Heart right ventricle (tissue), 16 donors: ENCODE measurements at regions of chr11 and their contacts with region 1.

Region 1: GRCh38 chr11:111938687-111939160 is 1.6 kb downstream of the DIXDC1 start:
- DNase-seq: no peak
- ATAC-seq: peak in 6 of 8 donors; percentile 4 to 41 (median 19)
- H3K4me3 ChIP-seq: peak overlapping the region in 4 of 10 donors; percentile 6 to 68 (median 35)
- H3K27ac ChIP-seq: peak overlapping the region in 8 of 10 donors; percentile 68 to 84 (median 76)
- H3K4me1 ChIP-seq: peaks cover 2 to 73% (median 43%) of the 10 kb centered on the region in 9 donors
- H3K27me3 ChIP-seq: no peaks in the 10 kb centered on the region
- CTCF ChIP-seq: no peak

Region 2: DNA sequence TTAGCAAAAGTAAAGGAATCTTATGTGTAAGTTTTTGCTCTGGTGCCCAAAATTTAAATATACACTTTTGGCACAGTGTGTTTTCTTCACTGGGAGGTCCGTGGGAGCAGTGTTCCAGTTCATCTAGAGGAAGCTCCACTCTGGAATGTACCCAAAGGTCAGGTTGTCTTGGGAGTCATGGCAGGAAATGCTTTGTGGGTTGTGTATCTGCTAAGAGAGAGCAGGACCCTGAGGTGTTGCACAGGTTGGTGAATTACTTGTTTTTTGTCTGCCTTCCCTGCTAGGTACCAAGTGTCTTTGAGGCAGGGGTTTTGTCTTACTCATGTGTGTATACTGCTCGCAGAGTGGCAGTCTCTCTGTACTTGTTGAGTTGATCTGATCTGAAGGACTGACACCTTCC is 35.7 kb after region 1 on chr11:
- intact Hi-C with region 1: loop called in 7 of 10 experiments (anchors 5 kb)
- DNase-seq: no peak
- ATAC-seq: no peak
- H3K4me3 ChIP-seq: no peak overlapping the region
- H3K27ac ChIP-seq: peak overlapping the region in 6 of 10 donors; percentile 64 to 91 (median 88)
- H3K4me1 ChIP-seq: peaks cover 11 to 52% (median 36%) of the 10 kb centered on the region in 9 donors
- H3K27me3 ChIP-seq: peaks cover 0 to 28% (median 0%) of the 10 kb centered on the region in 7 donors
- CTCF ChIP-seq: no peak

Region 3: GRCh38 chr11:111982019-111982464 is 43.3 kb after region 1 on chr11:
- intact Hi-C with region 1: loop called in 9 of 10 experiments (anchors 2 to 5 kb)
- DNase-seq: peak in 1 of 2 donors; percentile 40
- ATAC-seq: peak in 7 of 8 donors; percentile 51 to 65 (median 55)
- H3K4me3 ChIP-seq: no peak overlapping the region
- H3K27ac ChIP-seq: peak overlapping the region in 6 of 10 donors; percentile 49 to 71 (median 62)
- H3K4me1 ChIP-seq: peaks cover 9 to 63% (median 35%) of the 10 kb centered on the region in 9 donors
- H3K27me3 ChIP-seq: peaks cover 0 to 21% (median 0%) of the 10 kb centered on the region in 7 donors
- CTCF ChIP-seq: peak; percentile 30 to 73 (median 56)

Region 4: GRCh38 chr11:111992206-111992855 is 53.6 kb after region 1 on chr11:
- intact Hi-C with region 1: loop called in 2 of 10 experiments (anchors 5 kb)
- DNase-seq: no peak
- ATAC-seq: peak in 7 of 8 donors; percentile 38 to 76 (median 43)
- H3K4me3 ChIP-seq: no peak overlapping the region
- H3K27ac ChIP-seq: peak overlapping the region in 8 of 10 donors; percentile 33 to 76 (median 60)
- H3K4me1 ChIP-seq: peaks cover 3 to 44% (median 18%) of the 10 kb centered on the region in 9 donors
- H3K27me3 ChIP-seq: no peaks in the 10 kb centered on the region
- CTCF ChIP-seq: no peak

Region 5: GRCh38 chr11:112086422-112087191 is 147.9 kb after region 1 on chr11 and contains the starts of genes SDHD and TIMM8B:
- intact Hi-C with region 1: loop called in 2 of 10 experiments (anchors 10 kb)
- DNase-seq: peak; percentile 95 to 97
- ATAC-seq: peak; percentile 92 to 98 (median 96)
- H3K4me3 ChIP-seq: peak within 1 kb of the TSS; percentile 71 to 94 (median 84)
- H3K27ac ChIP-seq: peak within 1 kb of the TSS; percentile 69 to 95 (median 88)
- H3K4me1 ChIP-seq: peaks cover 3 to 68% (median 36%) of the 10 kb centered on the region in 9 donors
- H3K27me3 ChIP-seq: no peaks in the 10 kb centered on the region
- CTCF ChIP-seq: peak in 5 of 9 donors; percentile 18 to 50 (median 46)
- total RNA-seq, gene SDHD: 205 to 330 (median 279) TPM
- total RNA-seq, gene TIMM8B: 142 to 194 (median 168) TPM